ENCODE measurements at regions of chr17 and their contacts with region 1.

Region 1: DNA sequence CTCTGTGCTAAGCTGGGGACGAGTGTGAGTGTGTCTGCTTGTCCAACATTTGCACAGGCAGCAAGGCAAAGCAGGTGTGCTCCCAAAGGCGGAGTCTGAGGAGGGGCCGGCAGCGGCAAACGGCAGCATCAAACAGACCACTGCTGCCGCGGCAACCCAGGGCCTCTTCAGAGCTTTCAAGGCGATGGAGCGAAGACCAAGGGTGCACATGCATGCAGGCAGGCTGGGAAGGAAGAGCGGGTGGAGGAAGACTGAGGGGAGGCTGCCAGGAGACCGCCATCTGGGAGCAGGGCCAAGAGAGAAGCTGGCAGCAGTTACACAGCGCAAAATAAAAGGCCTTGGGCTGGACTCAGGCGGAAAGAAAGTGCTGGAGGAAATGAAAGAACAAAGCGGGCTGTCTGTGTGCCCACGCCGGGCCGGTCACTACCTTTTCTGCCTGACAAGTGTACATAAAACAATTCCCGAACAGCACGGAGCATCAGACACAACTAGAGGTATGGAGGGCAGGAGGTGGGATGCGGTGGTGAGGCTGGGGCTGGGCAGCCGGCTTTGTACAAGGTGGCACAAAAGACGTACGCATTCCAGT is 8.5 kb downstream of the TIMM22 start:
- DNase-seq: peak; percentile 85 to 91
- H3K4me3 ChIP-seq: peak overlapping the region; percentile 16 to 25 (median 20)
- H3K27ac ChIP-seq: peak overlapping the region; percentile 86 to 91 (median 89)
- H3K4me1 ChIP-seq: peaks cover 59 to 92% (median 78%) of the 10 kb centered on the region in 4 donors
- H3K27me3 ChIP-seq: no peaks in the 10 kb centered on the region
- CTCF ChIP-seq: no peak
- EP300 ChIP-seq: no peak
- POLR2A ChIP-seq: no peak

Region 2: GRCh38 chr17:1055751-1056645 is 50.5 kb after region 1 on chr17:
- intact Hi-C with region 1: loop called (anchors 10 kb)
- DNase-seq: peak; percentile 63 to 88
- H3K4me3 ChIP-seq: no peak overlapping the region
- H3K27ac ChIP-seq: no peak overlapping the region
- H3K4me1 ChIP-seq: peaks cover 0 to 8% (median 3%) of the 10 kb centered on the region in 4 donors
- H3K27me3 ChIP-seq: no peaks in the 10 kb centered on the region
- CTCF ChIP-seq: peak in 5 of 7 experiments; percentile 58 to 77 (median 64)
- EP300 ChIP-seq: no peak
- POLR2A ChIP-seq: no peak

Region 3: GRCh38 chr17:1865252-1866037 is 860.0 kb after region 1 on chr17:
- intact Hi-C with region 1: no loop called
- DNase-seq: peak; percentile 46 to 60
- H3K4me3 ChIP-seq: no peak overlapping the region
- H3K27ac ChIP-seq: no peak overlapping the region
- H3K4me1 ChIP-seq: no peaks in the 10 kb centered on the region
- H3K27me3 ChIP-seq: no peaks in the 10 kb centered on the region
- CTCF ChIP-seq: peak in 5 of 7 experiments; percentile 9 to 68 (median 35)
- EP300 ChIP-seq: no peak
- POLR2A ChIP-seq: no peak

Measured in stomach (tissue), 19 donors.